Activated T-helper 1 cell treated with anti-CD3 and anti-CD28 coated beads, Interleukin-12 subunit alpha, Interleukin-12 subunit beta, Interleukin-2, Interleukin-4 antibody, amounts not matched to agents 30 ng/mL and 10 ng/mL and 1 ng/mL, durations not matched to agents 14 hours and 24 hours and 36 hours (primary cell): ENCODE measurements at regions of chr2 and their contacts with region 1.

Region 1: DNA sequence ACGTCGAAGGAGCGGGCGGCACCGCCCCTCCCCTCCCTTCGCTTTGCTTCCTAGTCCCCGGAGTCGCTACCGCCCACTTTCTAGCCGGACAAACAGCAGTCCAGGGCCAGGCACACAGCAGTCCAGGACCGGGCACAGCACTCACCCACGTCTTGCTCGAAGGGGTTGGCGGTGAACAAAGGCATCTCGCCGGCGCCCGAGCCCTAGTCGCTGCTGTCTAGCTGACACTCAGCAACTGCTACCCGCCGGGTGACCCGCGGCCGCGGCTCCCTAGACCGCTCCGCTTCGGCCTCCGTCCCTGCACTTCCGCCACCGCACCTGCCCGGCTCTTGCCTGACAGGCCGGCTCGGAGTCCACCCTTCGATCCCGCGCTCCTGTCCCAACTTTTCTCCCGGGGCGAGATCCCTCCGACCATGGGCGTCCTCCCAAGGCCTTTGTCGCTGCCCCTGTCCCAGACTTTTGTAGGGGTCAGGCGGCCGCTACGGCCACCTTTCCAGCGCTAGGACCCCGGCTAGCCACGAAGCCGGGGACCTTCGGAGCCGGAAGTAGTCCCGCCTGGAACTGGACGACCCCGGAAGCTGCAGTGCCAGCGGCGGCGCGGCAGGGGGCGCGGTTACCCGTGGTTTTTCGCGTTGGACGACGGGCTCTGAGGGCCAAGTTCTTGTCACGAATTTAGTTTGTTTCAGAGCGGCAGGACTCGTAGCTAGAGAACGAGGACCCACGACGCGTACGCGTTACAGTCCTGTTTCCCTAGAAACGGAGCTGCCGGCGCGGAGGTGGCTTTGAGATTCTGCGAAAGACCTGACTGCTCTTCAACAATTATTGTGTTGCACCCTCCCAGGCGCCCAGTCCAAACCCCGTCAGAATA is at the start of gene STAM2:
- DNase-seq: peak; percentile 91
- H3K4me3 Mint-ChIP-seq: peak within 1 kb of the TSS; percentile 95
- H3K27ac Mint-ChIP-seq: peak within 1 kb of the TSS; percentile 96
- H3K4me1 Mint-ChIP-seq: peaks cover 38% of the 10 kb centered on the region
- H3K27me3 Mint-ChIP-seq: peaks cover 3% of the 10 kb centered on the region
- total RNA-seq, gene STAM2: 18.6 and 20.0 TPM in 2 replicates

Region 2: DNA sequence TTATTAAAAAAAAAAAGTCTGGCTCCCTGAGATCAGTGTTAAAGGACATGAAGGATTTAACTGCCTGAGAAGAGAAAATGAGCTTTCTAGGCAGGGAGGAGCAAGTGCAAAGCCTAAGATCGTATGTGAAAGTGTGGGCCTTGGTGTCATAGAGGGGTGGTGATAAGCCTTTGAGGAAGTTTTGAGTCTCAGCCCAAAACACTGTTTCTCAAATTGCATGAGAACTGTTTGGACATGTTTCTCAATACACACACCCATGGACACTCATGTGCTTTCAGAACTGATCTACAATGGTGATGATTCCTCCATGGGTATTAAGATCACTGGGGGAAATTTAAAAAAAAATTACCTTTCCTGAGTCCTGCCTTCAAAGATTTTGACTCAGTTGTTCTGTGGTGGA is 1351.6 kb before region 1 on chr2:
- intact Hi-C with region 1: no loop called
- DNase-seq: no peak
- H3K4me3 Mint-ChIP-seq: no peak overlapping the region
- H3K27ac Mint-ChIP-seq: no peak overlapping the region
- H3K4me1 Mint-ChIP-seq: no peaks in the 10 kb centered on the region
- H3K27me3 Mint-ChIP-seq: peaks cover 3% of the 10 kb centered on the region

Region 3: GRCh38 chr2:152097801-152098495 is 77.7 kb before region 1 on chr2:
- intact Hi-C with region 1: loop called (anchors 5 kb)
- DNase-seq: no peak
- H3K4me3 Mint-ChIP-seq: peak overlapping the region; percentile 61
- H3K27ac Mint-ChIP-seq: no peak overlapping the region
- H3K4me1 Mint-ChIP-seq: peaks cover 18% of the 10 kb centered on the region
- H3K27me3 Mint-ChIP-seq: peaks cover 64% of the 10 kb centered on the region

Region 4: DNA sequence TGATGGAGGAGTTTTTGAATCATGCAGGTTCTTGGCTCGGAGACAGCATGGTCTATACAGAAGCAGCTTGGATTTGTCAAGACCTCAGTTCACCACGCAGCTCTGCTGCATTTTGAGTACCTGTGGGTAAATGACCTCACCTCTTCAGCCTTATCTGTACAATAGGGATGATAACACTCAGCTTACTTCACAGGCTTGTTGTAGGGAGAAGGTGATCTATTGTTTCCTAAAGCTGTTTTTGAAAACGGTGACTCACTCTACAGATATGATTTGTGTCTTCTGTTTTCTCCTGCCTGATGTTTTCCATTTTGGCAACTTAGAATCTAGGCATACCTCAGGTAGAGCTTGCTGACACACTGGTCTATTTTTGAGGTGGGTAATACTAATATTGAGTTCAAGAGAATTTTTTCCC is 239.5 kb after region 1 on chr2:
- intact Hi-C with region 1: loop called (anchors 2 kb)
- DNase-seq: no peak
- H3K4me3 Mint-ChIP-seq: peak overlapping the region; percentile 16
- H3K27ac Mint-ChIP-seq: peak overlapping the region; percentile 77
- H3K4me1 Mint-ChIP-seq: peaks cover 41% of the 10 kb centered on the region
- H3K27me3 Mint-ChIP-seq: no peaks in the 10 kb centered on the region

Region 5: GRCh38 chr2:152573168-152573567 is 397.5 kb after region 1 on chr2:
- intact Hi-C with region 1: loop called (anchors 1 kb)
- DNase-seq: peak; percentile 7
- H3K4me3 Mint-ChIP-seq: no peak overlapping the region
- H3K27ac Mint-ChIP-seq: no peak overlapping the region
- H3K4me1 Mint-ChIP-seq: peaks cover 9% of the 10 kb centered on the region
- H3K27me3 Mint-ChIP-seq: peaks cover 6% of the 10 kb centered on the region

Region 6: GRCh38 chr2:152740743-152741328 is 565.1 kb after region 1 on chr2:
- intact Hi-C with region 1: loop called (anchors 1 kb)
- DNase-seq: no peak
- H3K4me3 Mint-ChIP-seq: no peak overlapping the region
- H3K27ac Mint-ChIP-seq: no peak overlapping the region
- H3K4me1 Mint-ChIP-seq: no peaks in the 10 kb centered on the region
- H3K27me3 Mint-ChIP-seq: peaks cover 1% of the 10 kb centered on the region